ENCODE measurements at regions of chr7 and their contacts with region 1.

Region 1: DNA sequence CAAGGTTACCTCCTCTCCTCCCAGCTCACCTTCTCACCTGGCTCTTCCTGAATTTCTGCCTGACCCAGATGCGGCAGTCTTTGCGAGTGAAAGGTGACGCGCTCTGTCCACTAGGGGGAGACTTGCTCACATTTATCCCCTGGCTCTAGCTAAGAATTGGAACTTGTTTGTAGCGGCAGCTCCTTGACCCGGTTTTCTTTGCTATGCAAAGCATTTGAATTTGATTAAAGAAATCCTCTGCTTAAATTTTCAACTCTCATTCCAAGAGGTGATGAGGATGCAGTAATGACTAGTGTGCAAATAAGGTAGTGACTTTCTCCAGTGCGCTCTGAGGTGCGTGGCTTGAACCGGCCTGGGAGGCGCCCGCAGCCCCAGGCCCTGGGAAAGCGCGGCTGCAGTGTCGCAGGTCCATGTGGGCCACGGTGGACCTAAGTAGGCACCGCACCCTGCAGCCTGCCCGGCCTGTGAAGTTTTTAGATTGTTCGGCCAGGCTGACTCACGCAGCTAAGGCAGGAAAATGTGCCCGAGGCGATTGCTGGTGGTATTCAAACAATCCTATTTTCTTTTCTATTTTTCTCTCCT is 336.9 kb upstream of the NPSR1 start:
- DNase-seq: peak; percentile 78
- H3K4me3 ChIP-seq: peak overlapping the region; percentile 32 to 42
- H3K27ac ChIP-seq: peak overlapping the region in 1 of 2 experiments; percentile 32; a peak in 1 of 4 replicates
- H3K4me1 ChIP-seq: peaks cover 4 to 11% of the 10 kb centered on the region in 2 experiments; a peak in 3 of 4 replicates
- H3K27me3 ChIP-seq: no peaks in the 10 kb centered on the region
- CTCF ChIP-seq: peak; percentile 100
- EP300 ChIP-seq: no peak
- RAD21 ChIP-seq: peak; percentile 88

Region 2: DNA sequence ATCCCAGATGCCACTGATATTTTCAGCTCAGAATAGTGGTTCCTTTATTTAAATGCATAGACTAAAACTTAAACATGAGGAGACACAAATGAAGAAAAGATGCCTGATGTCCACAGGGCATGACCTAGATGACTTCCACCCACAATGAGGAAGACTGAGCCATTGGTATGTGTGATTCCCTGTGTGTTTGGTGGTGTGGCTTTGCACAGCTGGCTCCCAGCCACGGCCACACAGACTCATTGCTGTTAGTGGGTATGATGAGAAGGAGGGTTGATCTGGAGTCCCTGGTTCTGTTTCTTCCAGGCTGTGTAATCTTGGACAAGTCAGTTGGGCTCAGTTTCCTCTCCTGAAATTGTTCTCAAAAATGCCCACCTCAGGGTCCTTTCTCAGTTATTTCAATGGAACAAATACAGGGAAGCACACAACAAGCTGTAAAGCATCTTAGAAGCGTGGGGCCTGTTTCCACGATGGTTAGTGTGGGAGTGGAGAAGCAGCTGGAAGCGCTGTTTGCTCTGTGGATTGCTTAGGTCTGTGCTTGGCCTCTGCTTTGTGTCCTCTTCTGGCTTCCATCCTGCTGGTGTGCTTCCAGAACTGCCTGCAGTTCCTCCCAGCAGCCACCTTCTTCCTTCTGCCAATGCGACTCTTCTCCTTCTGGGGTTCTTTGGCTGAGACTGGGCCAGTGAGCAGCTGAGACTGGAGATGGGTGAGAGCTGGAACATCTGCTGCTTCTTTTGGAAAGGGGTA is 112.0 kb before region 1 on chr7:
- CTCF ChIA-PET with region 1: no interaction called
- POLR2A ChIA-PET with region 1: no interaction called
- DNase-seq: no peak
- H3K4me3 ChIP-seq: no peak overlapping the region
- H3K27ac ChIP-seq: no peak overlapping the region
- H3K4me1 ChIP-seq: no peaks in the 10 kb centered on the region
- H3K27me3 ChIP-seq: no peaks in the 10 kb centered on the region
- CTCF ChIP-seq: no peak
- EP300 ChIP-seq: no peak
- RAD21 ChIP-seq: no peak

Region 3: GRCh38 chr7:34296663-34297062 is 24.4 kb before region 1 on chr7:
- CTCF ChIA-PET with region 1: interaction called, 13 read pairs
- POLR2A ChIA-PET with region 1: no interaction called
- DNase-seq: no peak
- H3K4me3 ChIP-seq: no peak overlapping the region
- H3K27ac ChIP-seq: peak overlapping the region in 1 of 2 experiments; percentile 30; a peak in 1 of 4 replicates
- H3K4me1 ChIP-seq: no peaks in the 10 kb centered on the region
- H3K27me3 ChIP-seq: no peaks in the 10 kb centered on the region
- CTCF ChIP-seq: no peak
- EP300 ChIP-seq: no peak
- RAD21 ChIP-seq: no peak

Region 4: DNA sequence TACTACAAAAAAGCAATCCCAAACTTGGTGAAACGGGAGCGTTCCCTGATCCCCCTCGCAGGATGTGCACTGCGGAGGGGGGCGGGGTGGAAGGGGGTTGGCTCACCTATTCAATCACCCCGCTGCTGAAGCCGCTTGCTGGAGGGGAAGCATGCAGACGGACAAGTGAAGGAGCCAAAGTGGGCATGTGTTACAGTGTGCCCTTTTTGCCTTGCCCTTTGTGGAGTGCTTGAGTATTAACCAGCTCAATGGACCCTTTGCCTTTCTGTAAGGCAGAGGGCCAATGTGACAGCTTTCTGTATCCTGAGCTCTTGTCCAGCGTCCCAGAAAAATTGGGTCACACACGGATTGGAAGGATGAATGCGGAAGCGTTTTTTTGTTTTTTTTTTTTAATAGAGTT is 12.0 kb before region 1 on chr7:
- CTCF ChIA-PET with region 1: interaction called, 21 read pairs
- POLR2A ChIA-PET with region 1: no interaction called
- DNase-seq: no peak
- H3K4me3 ChIP-seq: no peak overlapping the region
- H3K27ac ChIP-seq: no peak overlapping the region
- H3K4me1 ChIP-seq: no peaks in the 10 kb centered on the region
- H3K27me3 ChIP-seq: no peaks in the 10 kb centered on the region
- CTCF ChIP-seq: no peak
- EP300 ChIP-seq: no peak
- RAD21 ChIP-seq: no peak

Region 5: DNA sequence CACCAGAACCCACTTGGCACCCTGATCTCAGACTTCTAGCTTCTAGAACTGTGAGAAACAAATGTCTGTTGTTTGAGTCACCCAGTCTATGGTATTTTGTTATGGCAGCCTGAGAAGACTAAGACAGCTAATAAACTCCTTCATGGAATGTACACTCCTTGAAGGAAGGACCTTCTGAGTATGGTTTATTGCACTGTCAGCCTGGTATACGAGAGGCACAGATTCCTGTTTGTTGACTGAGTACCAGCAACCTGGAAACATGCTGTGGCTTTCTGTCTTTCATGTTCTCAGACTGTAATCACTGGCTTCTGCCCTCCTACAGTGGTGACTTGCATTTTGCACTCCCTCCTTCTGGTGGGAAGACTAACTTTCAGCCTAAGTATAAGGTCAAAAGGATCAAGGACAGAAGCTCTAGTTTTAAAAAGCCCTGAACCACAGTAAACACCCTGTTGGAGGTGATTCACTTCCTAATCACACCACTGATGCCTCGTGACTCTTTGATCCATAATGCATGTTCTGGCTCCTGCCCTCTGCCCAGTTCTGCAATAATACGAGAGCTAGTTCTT is 18.0 kb after region 1 on chr7:
- CTCF ChIA-PET with region 1: interaction called, 33 read pairs
- POLR2A ChIA-PET with region 1: no interaction called
- DNase-seq: no peak
- H3K4me3 ChIP-seq: no peak overlapping the region
- H3K27ac ChIP-seq: no peak overlapping the region
- H3K4me1 ChIP-seq: no peaks in the 10 kb centered on the region
- H3K27me3 ChIP-seq: no peaks in the 10 kb centered on the region
- CTCF ChIP-seq: no peak
- EP300 ChIP-seq: no peak
- RAD21 ChIP-seq: no peak

Region 6: GRCh38 chr7:34354899-34355298 is 33.8 kb after region 1 on chr7:
- CTCF ChIA-PET with region 1: interaction called, 17 read pairs
- POLR2A ChIA-PET with region 1: no interaction called
- DNase-seq: no peak
- H3K4me3 ChIP-seq: no peak overlapping the region
- H3K27ac ChIP-seq: peak overlapping the region; percentile 51 to 60; a peak in 3 of 4 replicates
- H3K4me1 ChIP-seq: peaks cover 0 to 4% of the 10 kb centered on the region in 2 experiments; a peak in 1 of 4 replicates
- H3K27me3 ChIP-seq: no peaks in the 10 kb centered on the region
- CTCF ChIP-seq: no peak
- EP300 ChIP-seq: peak in 1 of 2 experiments; percentile 13; a peak in 1 of 4 replicates
- RAD21 ChIP-seq: no peak

Region 7: DNA sequence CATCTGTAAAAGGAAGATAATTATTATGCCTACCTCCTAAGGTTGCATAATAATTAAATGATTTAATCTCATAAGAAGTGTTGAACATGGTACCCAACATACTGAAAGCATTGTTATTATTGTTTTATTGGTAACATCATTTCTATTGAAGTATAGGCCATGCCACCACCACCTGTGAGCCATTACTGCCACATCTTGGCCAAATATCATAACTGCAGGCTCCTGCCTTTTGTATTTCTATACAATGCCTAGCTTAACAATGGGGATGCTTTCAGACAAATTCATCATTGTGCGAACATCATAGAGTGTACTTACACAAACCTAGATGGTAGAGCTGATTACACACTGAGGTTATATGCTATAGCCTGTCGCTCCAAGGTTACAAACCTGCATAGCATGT is 275.8 kb after region 1 on chr7:
- CTCF ChIA-PET with region 1: interaction called, 22 read pairs
- POLR2A ChIA-PET with region 1: no interaction called
- DNase-seq: peak; percentile 3
- H3K4me3 ChIP-seq: no peak overlapping the region
- H3K27ac ChIP-seq: no peak overlapping the region
- H3K4me1 ChIP-seq: no peaks in the 10 kb centered on the region
- H3K27me3 ChIP-seq: peaks cover 26% of the 10 kb centered on the region; the same call in 1 of the 2 replicates
- CTCF ChIP-seq: peak; percentile 53
- EP300 ChIP-seq: no peak
- RAD21 ChIP-seq: peak; percentile 56

Measured in SK-N-SH (cell line).